Transverse colon (tissue), 4 donors: ENCODE measurements at regions of chr20 and their contacts with region 1.

Region 1: DNA sequence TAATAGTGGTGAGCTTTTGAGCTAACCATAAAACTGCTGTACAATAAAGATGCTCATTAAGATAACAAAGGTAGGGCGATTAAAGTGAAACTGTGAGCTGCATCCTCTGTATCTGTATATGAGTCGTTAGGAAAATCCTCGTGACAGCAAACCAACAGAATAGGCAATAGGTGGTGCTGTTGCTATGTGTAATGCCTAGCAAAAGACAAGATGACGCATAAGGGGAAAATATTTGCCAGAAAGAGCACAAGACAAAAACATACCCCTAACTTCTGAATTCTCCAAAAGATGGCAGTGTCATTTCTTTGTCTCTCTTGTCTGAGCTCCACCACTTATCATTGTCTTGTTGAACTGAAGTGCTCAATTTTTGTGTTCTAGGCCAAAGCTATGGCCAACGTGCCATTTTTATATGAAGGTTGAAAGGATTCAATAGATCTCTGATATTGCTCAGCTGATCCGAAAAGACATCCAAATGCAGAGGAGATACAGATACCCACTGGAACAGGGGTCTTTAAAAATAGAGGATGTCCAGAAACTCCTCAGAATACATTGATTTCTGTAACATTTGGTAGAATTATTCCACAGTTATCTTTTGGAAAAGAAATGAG is 56.3 kb upstream of the ANKEF1 start:
- DNase-seq: peak; percentile 15
- H3K4me3 ChIP-seq: no peak overlapping the region
- H3K27ac ChIP-seq: no peak overlapping the region
- H3K4me1 ChIP-seq: peaks cover 0 to 6% (median 3%) of the 10 kb centered on the region in 4 donors
- H3K27me3 ChIP-seq: no peaks in the 10 kb centered on the region
- CTCF ChIP-seq: peak; percentile 67 to 77 (median 67)
- EP300 ChIP-seq: no peak
- POLR2A ChIP-seq: no peak

Region 2: GRCh38 chr20:9532069-9532838 is 446.2 kb before region 1 on chr20:
- in situ Hi-C with region 1: no loop called
- intact Hi-C with region 1: no loop called
- DNase-seq: no peak
- H3K4me3 ChIP-seq: no peak overlapping the region
- H3K27ac ChIP-seq: no peak overlapping the region
- H3K4me1 ChIP-seq: no peaks in the 10 kb centered on the region
- H3K27me3 ChIP-seq: no peaks in the 10 kb centered on the region
- CTCF ChIP-seq: no peak
- EP300 ChIP-seq: no peak
- POLR2A ChIP-seq: no peak

Region 3: DNA sequence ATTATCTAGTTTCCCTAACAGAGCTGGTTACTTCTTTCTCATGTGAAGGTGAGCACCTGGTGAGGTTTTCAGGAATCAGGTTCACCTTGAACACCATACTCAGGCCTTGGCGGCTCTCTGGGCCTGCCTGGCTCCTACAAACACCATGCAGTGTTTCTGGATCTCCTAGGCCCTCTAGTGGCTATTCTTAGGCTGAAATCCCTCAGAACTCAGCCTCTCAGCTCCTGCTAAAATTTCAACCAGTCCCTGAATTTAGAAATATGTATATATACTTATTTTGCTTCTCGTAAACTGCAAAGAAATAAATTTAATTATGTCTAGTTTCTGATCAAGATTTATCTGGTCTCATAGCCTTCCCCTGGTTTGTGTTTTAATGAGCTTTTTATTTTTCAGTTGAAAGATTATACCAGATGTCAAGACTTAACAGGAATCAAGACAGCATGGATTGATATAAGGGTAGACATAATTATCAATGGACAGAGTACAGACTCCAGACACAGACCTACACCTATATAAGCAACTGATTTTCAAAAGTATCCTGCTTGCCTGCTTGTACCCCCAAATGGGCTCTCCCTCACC is 112.2 kb after region 1 on chr20:
- in situ Hi-C with region 1: loop called in 3 of 4 experiments (anchors 5 to 10 kb)
- intact Hi-C with region 1: no loop called
- DNase-seq: peak; percentile 13
- H3K4me3 ChIP-seq: no peak overlapping the region
- H3K27ac ChIP-seq: no peak overlapping the region
- H3K4me1 ChIP-seq: no peaks in the 10 kb centered on the region
- H3K27me3 ChIP-seq: no peaks in the 10 kb centered on the region
- CTCF ChIP-seq: peak; percentile 48 to 73 (median 63)
- EP300 ChIP-seq: no peak
- POLR2A ChIP-seq: no peak

Region 4: DNA sequence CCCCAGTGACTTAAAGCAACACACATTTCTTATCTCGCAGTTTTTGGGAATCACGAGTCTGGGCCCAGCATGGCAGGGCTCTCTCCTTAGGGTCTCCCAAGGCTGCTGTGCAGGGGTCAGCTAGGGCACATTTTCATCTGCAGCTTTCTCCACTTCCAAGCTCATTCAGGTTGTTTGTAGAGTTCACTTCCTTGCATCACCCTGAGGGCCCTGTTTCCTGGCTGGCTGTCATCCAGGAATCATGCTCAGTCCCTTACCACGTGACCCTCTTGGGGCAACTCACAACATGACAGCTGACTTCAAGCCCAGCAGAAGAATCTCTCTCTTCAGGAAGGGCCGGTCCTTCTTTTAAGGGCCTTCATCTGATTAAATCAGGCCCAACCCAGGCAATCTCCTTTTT is 261.5 kb after region 1 on chr20:
- in situ Hi-C with region 1: no loop called
- intact Hi-C with region 1: no loop called
- DNase-seq: peak; percentile 27
- H3K4me3 ChIP-seq: no peak overlapping the region
- H3K27ac ChIP-seq: no peak overlapping the region
- H3K4me1 ChIP-seq: no peaks in the 10 kb centered on the region
- H3K27me3 ChIP-seq: no peaks in the 10 kb centered on the region
- CTCF ChIP-seq: no peak
- EP300 ChIP-seq: no peak
- POLR2A ChIP-seq: no peak

Region 5: DNA sequence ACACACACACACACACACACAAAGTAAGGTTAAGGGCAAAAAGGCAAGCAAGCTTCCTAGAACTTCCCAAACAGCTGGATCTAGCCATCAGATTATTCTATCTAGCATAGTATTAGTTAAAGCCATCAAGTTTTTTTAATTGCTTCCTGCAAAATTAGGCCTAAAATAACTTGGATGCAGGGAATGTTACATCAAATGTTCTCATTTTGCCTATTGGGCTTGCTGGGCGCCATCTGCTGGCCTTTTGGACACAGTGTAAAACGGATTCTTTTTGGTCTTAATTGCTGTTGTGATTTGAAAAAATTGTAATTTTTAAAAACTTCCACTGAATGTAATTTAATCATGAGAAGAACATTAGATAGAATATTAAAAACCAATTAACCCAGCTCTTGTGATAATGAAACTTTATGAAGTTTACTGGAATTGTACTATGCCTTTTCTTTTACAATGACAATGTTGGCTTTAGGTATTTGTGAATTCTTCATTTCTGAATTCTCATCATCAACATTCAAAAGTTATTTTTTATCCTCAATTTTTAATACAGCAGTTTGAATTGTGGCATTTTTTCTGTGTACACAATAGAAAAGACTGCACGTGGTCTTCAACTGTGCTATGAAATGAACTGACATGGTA is 448.7 kb after region 1 on chr20:
- in situ Hi-C with region 1: loop called in 3 of 4 experiments (anchors 5 to 25 kb)
- intact Hi-C with region 1: loop called (anchors 5 kb)
- DNase-seq: peak; percentile 41
- H3K4me3 ChIP-seq: no peak overlapping the region
- H3K27ac ChIP-seq: no peak overlapping the region
- H3K4me1 ChIP-seq: peaks cover 6 to 35% (median 13%) of the 10 kb centered on the region in 4 donors
- H3K27me3 ChIP-seq: no peaks in the 10 kb centered on the region
- CTCF ChIP-seq: peak; percentile 55 to 76 (median 71)
- EP300 ChIP-seq: no peak
- POLR2A ChIP-seq: no peak

Region 6: DNA sequence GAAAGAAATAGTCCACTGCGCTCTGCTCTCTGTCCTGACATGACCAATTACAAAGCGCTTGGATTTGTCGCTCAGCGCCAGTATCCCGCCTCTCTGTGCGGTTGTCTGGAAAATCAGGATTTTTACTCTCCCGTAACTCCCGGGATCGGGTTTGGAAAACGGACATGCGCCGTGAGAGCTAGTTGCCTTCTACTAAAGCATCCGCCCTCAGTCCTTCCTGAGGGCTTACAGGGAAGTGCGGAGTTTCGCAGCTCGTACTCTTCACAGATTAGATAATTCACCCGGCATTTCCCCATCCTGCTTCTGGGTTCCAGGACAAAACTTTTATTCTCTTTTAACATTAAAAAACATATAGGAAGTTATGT is 455.9 kb after region 1 on chr20:
- in situ Hi-C with region 1: loop called in 3 of 4 experiments (anchors 5 to 25 kb)
- intact Hi-C with region 1: loop called (anchors 5 kb)
- DNase-seq: peak; percentile 95
- H3K4me3 ChIP-seq: peak overlapping the region; percentile 71 to 86 (median 78)
- H3K27ac ChIP-seq: peak overlapping the region; percentile 94 to 97 (median 94)
- H3K4me1 ChIP-seq: peaks cover 5 to 47% (median 20%) of the 10 kb centered on the region in 4 donors
- H3K27me3 ChIP-seq: no peaks in the 10 kb centered on the region
- CTCF ChIP-seq: no peak
- EP300 ChIP-seq: no peak
- POLR2A ChIP-seq: peak; percentile 98